HCT116 (cell line): ENCODE measurements at regions of chr21 and their contacts with region 1.

Region 1: GRCh38 chr21:22791986-22792560 is 1793.9 kb downstream of the NCAM2 start:
- DNase-seq: no peak
- ATAC-seq: no peak
- H3K4me3 ChIP-seq: no peak overlapping the region
- H3K27ac ChIP-seq: no peak overlapping the region
- H3K4me1 ChIP-seq: no peaks in the 10 kb centered on the region
- H3K27me3 ChIP-seq: no peaks in the 10 kb centered on the region
- CTCF ChIP-seq: peak in 2 of 3 experiments; percentile 43 to 60; a peak in 4 of 6 replicates
- POLR2A ChIP-seq: no peak
- RAD21 ChIP-seq: no peak; the same call in 1 of the 2 replicates

Region 2: GRCh38 chr21:21163904-21164303 is 1628.2 kb before region 1 on chr21:
- CTCF ChIA-PET with region 1: no interaction called
- POLR2A ChIA-PET with region 1: no interaction called
- RAD21 ChIA-PET with region 1: no interaction called
- intact Hi-C with region 1: loop called (anchors 5 kb)
- DNase-seq: peak; percentile 7
- ATAC-seq: no peak
- H3K4me3 ChIP-seq: no peak overlapping the region
- H3K27ac ChIP-seq: no peak overlapping the region
- H3K4me1 ChIP-seq: no peaks in the 10 kb centered on the region
- H3K27me3 ChIP-seq: no peaks in the 10 kb centered on the region
- CTCF ChIP-seq: peak in 2 of 3 experiments; percentile 27 to 43; a peak in 3 of 6 replicates
- POLR2A ChIP-seq: no peak
- RAD21 ChIP-seq: no peak